ENCODE measurements at regions of chr12 and their contacts with region 1.

Region 1: DNA sequence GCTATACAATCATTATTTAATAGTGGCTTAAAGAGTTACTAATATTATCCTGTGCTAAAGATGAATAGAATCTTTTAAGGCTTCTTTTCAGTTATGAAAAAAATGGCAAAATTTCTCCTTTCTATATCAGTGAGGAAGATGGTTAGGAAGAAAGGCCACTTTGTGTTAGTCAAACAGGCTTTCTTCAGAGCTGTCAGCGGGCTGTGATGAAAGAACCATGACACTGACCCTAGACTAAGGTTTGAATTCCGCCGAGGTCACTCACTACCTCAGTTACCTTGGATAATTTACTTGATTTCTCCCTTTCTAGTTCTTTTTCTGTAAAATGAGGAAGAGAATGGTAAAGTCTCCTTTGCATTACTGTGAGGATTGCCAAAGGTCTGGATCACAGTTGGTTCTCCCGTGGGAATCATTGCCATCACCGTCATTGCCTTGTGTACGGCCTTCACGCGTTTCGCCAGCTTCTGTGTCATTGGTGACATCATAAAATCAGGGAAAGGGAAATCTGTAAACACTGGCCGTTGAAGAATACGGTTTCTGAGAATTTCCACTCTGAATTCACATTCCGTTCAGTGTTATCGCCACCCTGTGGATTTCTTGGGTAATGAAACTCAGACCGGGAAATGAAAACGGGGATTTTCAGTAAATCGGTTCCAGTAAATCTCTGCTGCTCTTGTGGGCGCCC is 26.7 kb upstream of the YBX3 start:
- DNase-seq: peak; percentile 89
- H3K4me3 ChIP-seq: peak overlapping the region; percentile 10 to 42 (median 34)
- H3K27ac ChIP-seq: peak overlapping the region; percentile 61 to 70 (median 65)
- H3K4me1 ChIP-seq: peaks cover 0 to 10% (median 0%) of the 10 kb centered on the region in 4 donors
- H3K27me3 ChIP-seq: no peaks in the 10 kb centered on the region
- CTCF ChIP-seq: peak; percentile 86 to 94 (median 92)
- EP300 ChIP-seq: peak in 3 of 4 donors; percentile 49 to 66 (median 57)
- POLR2A ChIP-seq: no peak

Region 2: DNA sequence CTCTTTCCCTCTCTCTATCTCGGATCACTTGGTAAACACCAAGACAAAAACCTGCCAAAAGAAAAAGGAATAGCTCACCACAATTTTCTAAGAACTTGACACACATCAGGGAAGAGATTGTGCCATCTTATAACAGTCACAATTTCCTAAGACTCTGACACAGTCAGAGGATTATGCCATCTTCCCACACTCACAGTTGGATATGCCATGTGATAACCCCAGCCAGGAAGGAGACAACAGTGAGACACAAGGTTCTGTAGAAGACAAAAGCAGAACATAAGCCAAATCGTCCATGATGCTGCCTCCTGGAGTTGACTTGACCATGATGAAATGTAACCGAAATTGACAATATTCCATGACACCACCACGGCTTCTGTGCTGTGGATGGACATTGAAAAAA is 722.1 kb before region 1 on chr12:
- intact Hi-C with region 1: no loop called
- DNase-seq: no peak
- H3K4me3 ChIP-seq: no peak overlapping the region
- H3K27ac ChIP-seq: no peak overlapping the region
- H3K4me1 ChIP-seq: no peaks in the 10 kb centered on the region
- H3K27me3 ChIP-seq: no peaks in the 10 kb centered on the region
- CTCF ChIP-seq: no peak
- EP300 ChIP-seq: no peak
- POLR2A ChIP-seq: no peak

Region 3: DNA sequence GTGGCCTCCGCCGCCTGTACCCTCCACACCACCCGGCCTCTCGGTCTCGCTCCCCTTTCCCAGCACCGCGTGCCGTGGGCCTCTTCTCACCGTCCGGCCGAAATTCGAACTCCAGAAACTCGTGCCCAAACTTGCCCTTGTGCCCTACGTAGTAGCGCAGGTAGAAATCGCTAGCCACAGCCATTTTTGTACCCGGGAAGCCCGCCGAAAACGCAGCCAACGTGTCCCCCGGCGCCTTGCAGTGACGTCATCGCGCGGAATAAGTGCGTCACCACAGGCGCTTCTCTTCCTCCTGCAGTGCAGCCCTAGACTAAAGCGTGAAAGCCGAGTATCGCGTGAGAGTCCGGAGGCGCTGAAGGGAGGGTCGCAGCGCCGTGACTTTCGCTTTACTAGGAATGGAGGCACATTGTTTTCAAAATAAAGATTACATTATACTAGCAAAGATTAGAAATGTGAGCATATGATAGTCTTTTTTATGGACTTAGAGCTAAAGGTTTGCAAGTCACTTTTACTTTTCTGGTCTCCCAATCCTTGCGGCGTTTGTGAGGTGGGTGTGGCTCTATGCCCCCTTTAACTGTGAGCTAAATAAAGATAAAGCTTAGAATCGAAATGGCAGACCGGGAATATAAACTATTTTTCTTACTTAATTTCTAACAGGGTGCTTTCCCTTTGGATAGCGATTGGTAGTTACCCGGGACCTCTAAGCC is 136.3 kb before region 1 on chr12 and contains the start of gene MAGOHB:
- intact Hi-C with region 1: loop called (anchors 1 kb)
- DNase-seq: peak; percentile 98
- H3K4me3 ChIP-seq: peak within 1 kb of the TSS; percentile 61 to 89 (median 74)
- H3K27ac ChIP-seq: peak within 1 kb of the TSS; percentile 82 to 90 (median 90)
- H3K4me1 ChIP-seq: peaks cover 0 to 20% (median 14%) of the 10 kb centered on the region in 4 donors
- H3K27me3 ChIP-seq: no peaks in the 10 kb centered on the region
- CTCF ChIP-seq: no peak
- EP300 ChIP-seq: peak in 2 of 4 donors; percentile 51 to 71
- POLR2A ChIP-seq: peak; percentile 32 to 43
- total RNA-seq, gene MAGOHB: 8.6 to 17.4 (median 12.5) TPM

Region 4: GRCh38 chr12:10624605-10625004 is 125.2 kb before region 1 on chr12:
- intact Hi-C with region 1: no loop called
- DNase-seq: no peak
- H3K4me3 ChIP-seq: no peak overlapping the region
- H3K27ac ChIP-seq: no peak overlapping the region
- H3K4me1 ChIP-seq: no peaks in the 10 kb centered on the region
- H3K27me3 ChIP-seq: no peaks in the 10 kb centered on the region
- CTCF ChIP-seq: no peak
- EP300 ChIP-seq: no peak
- POLR2A ChIP-seq: no peak

Region 5: GRCh38 chr12:10829994-10830393 is 80.2 kb after region 1 on chr12:
- intact Hi-C with region 1: no loop called
- DNase-seq: no peak
- H3K4me3 ChIP-seq: no peak overlapping the region
- H3K27ac ChIP-seq: no peak overlapping the region
- H3K4me1 ChIP-seq: no peaks in the 10 kb centered on the region
- H3K27me3 ChIP-seq: no peaks in the 10 kb centered on the region
- CTCF ChIP-seq: no peak
- EP300 ChIP-seq: no peak
- POLR2A ChIP-seq: no peak